SK-N-SH (cell line): ENCODE measurements at regions of chr4 and their contacts with region 1.

Region 1: GRCh38 chr4:147866532-147867271 is 134.8 kb downstream of the ARHGAP10 start:
- DNase-seq: peak; percentile 72
- H3K4me3 ChIP-seq: peak overlapping the region in 1 of 2 experiments; percentile 48; a peak in 1 of 4 replicates
- H3K27ac ChIP-seq: peak overlapping the region in 1 of 2 experiments; percentile 58; a peak in 1 of 4 replicates
- H3K4me1 ChIP-seq: peaks cover 12 to 30% of the 10 kb centered on the region in 2 experiments; a peak in 2 of 4 replicates
- H3K27me3 ChIP-seq: no peaks in the 10 kb centered on the region
- CTCF ChIP-seq: peak; percentile 100
- EP300 ChIP-seq: no peak
- RAD21 ChIP-seq: peak; percentile 100

Region 2: GRCh38 chr4:147525494-147526271 is 341.0 kb before region 1 on chr4:
- CTCF ChIA-PET with region 1: interaction called, 10 read pairs
- POLR2A ChIA-PET with region 1: no interaction called
- DNase-seq: no peak
- H3K4me3 ChIP-seq: no peak overlapping the region
- H3K27ac ChIP-seq: no peak overlapping the region; a peak in 1 of 4 replicates
- H3K4me1 ChIP-seq: peaks cover 0 to 2% of the 10 kb centered on the region in 2 experiments; a peak in 3 of 4 replicates
- H3K27me3 ChIP-seq: no peaks in the 10 kb centered on the region
- CTCF ChIP-seq: no peak
- EP300 ChIP-seq: no peak
- RAD21 ChIP-seq: no peak

Region 3: DNA sequence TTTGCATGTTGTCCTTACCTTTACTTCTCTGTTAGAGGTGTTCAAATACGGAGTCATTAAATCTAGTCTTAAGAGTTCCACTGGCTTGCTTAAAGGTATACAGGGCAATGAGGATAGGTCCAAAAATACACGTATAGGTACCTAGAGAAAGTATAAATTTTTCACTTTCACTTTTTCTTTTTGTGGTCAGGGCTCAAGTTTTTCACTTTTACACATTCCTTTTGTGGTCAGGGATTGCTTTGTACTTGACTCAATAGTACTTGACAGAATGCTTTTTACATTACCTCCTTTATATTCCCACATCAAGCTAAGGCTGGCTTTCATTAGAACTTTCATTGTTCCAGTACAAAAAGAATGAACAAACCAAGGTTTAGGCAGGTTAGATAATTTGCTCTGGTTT is 227.8 kb before region 1 on chr4:
- CTCF ChIA-PET with region 1: interaction called, 26 read pairs
- POLR2A ChIA-PET with region 1: no interaction called
- DNase-seq: no peak
- H3K4me3 ChIP-seq: no peak overlapping the region
- H3K27ac ChIP-seq: peak overlapping the region in 1 of 2 experiments; percentile 44; a peak in 2 of 4 replicates
- H3K4me1 ChIP-seq: peaks cover 0 to 2% of the 10 kb centered on the region in 2 experiments; a peak in 1 of 4 replicates
- H3K27me3 ChIP-seq: no peaks in the 10 kb centered on the region
- CTCF ChIP-seq: no peak
- EP300 ChIP-seq: no peak
- RAD21 ChIP-seq: no peak

Region 4: DNA sequence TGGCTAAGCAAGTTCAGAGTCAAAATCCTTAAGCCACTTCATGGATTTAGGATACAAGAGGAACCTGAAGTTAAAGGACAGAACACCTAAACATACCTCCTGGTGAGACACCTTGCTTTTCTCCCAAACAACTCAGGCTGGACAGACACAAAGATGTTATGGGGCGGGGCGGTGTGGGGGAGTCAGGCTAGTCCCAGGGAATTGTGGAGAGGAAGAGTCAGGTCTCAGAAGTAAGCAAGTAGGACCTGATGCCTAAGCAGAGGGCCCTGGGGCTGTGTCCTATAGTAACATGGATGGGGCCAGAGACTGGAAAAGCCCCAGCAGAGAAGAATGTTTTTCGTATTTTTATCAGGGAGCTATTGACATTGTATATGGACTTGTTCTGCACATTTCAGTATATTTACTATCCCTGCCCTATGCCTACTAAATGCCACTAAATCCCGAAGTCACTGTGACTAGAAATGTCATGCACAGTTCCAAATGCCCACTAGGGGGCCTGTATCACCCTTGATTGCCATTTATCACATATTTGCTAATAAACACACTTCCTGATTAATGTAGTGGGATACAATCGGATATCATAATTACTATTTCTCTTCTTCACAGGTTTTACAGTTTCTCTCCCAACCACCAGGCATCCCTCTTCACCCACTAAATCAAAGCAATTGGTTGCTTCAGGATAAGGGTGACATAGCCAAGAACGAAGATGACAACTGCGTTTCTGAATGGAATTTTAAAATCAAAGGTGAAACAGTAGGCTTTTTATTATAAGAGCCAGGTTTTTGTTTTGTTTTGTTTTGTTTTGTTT is 158.6 kb before region 1 on chr4:
- CTCF ChIA-PET with region 1: interaction called, 182 read pairs
- POLR2A ChIA-PET with region 1: no interaction called
- DNase-seq: peak; percentile 57
- H3K4me3 ChIP-seq: no peak overlapping the region; a peak in 1 of 4 replicates
- H3K27ac ChIP-seq: no peak overlapping the region; a peak in 1 of 4 replicates
- H3K4me1 ChIP-seq: no peaks in the 10 kb centered on the region; a peak in 1 of 4 replicates
- H3K27me3 ChIP-seq: no peaks in the 10 kb centered on the region
- CTCF ChIP-seq: peak; percentile 98
- EP300 ChIP-seq: no peak
- RAD21 ChIP-seq: peak; percentile 85

Region 5: GRCh38 chr4:147768113-147768512 is 98.6 kb before region 1 on chr4:
- CTCF ChIA-PET with region 1: interaction called, 14 read pairs
- POLR2A ChIA-PET with region 1: no interaction called
- DNase-seq: no peak
- H3K4me3 ChIP-seq: no peak overlapping the region
- H3K27ac ChIP-seq: peak overlapping the region; percentile 16 to 38; a peak in 3 of 4 replicates
- H3K4me1 ChIP-seq: peaks cover 12 to 32% of the 10 kb centered on the region in 2 experiments
- H3K27me3 ChIP-seq: no peaks in the 10 kb centered on the region
- CTCF ChIP-seq: no peak
- EP300 ChIP-seq: 0 out of 4 replicates have a peak, but pooled peaks have one; percentile 15 to 25
- RAD21 ChIP-seq: no peak

Region 6: GRCh38 chr4:147843162-147843561 is 23.5 kb before region 1 on chr4:
- CTCF ChIA-PET with region 1: interaction called, 19 read pairs
- POLR2A ChIA-PET with region 1: no interaction called
- DNase-seq: no peak
- H3K4me3 ChIP-seq: no peak overlapping the region
- H3K27ac ChIP-seq: no peak overlapping the region
- H3K4me1 ChIP-seq: peaks cover 0 to 10% of the 10 kb centered on the region in 2 experiments; a peak in 2 of 4 replicates
- H3K27me3 ChIP-seq: no peaks in the 10 kb centered on the region
- CTCF ChIP-seq: no peak
- EP300 ChIP-seq: no peak
- RAD21 ChIP-seq: no peak